Natural killer cell (primary cell): ENCODE measurements at regions of chr6 and their contacts with region 1.

Region 1: DNA sequence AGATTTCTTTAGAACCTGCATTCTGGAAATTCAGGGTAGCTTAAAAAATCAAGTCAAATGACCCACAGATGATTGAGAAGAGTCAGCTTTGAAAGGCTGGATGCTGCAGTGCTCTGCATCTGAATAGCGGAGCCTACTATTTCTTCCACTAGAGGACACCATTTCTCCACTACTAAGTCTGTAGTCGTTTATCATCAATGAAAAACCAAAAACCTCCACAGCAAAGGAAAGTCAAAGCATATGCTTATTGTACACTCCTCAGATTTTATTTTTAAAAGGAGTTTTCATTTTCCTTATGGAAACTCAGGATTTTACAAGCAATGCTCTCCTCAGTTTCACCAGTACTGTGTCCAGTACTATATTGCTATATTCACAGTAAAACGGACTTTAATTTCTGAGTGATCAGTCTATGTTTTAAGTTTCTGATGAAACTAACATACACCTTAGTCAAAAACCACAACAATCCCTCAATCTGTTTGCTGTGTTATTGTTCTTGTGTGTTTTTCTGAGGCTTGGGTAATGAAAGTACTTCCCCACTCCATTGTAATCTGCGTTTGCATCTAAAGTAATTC is 50.5 kb upstream of the ENPP5 start:
- DNase-seq: peak in 1 of 2 donors; percentile 49
- ATAC-seq: peak; percentile 69 to 88 (median 73)
- H3K4me3 ChIP-seq: no peak overlapping the region
- H3K4me3 Mint-ChIP-seq: no peak overlapping the region
- H3K27ac ChIP-seq: no peak overlapping the region
- H3K27ac Mint-ChIP-seq: no peak overlapping the region
- H3K4me1 ChIP-seq: no peaks in the 10 kb centered on the region
- H3K4me1 Mint-ChIP-seq: no peaks in the 10 kb centered on the region
- H3K27me3 ChIP-seq: no peaks in the 10 kb centered on the region
- H3K27me3 Mint-ChIP-seq: no peaks in the 10 kb centered on the region
- CTCF ChIP-seq: peak; percentile 84

Region 2: DNA sequence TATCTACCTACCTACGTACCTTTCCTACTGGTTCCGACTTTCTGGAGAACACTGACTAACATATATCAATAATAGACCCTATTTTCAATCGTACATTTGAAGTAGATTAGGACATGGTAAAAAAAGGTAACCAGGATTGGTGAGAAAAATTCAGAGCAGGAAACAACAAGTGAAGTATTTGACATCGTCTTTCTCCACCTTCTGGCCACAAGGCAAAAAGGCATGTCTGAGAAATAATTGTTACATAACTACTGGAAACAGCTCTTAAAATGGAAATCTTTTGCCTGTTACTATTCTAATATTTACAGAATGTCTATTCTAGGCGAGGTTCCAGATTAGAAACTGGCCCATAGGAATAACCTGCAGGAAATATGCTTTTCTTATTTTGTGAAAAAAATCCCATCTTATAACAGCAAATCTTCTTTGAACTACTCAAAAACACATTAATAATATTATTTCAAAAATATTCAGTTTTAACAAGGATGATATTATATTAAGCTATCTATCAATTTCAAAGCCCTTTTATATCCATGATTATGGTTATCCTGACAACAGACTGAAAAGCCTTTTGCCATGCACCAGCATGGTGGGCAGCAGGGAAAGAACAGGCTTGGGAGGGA is 189.1 kb after region 1 on chr6:
- intact Hi-C with region 1: loop called (anchors 1 kb)
- DNase-seq: peak in 1 of 2 donors; percentile 81
- ATAC-seq: peak in 1 of 3 donors; percentile 74
- H3K4me3 ChIP-seq: no peak overlapping the region
- H3K4me3 Mint-ChIP-seq: no peak overlapping the region
- H3K27ac ChIP-seq: no peak overlapping the region
- H3K27ac Mint-ChIP-seq: no peak overlapping the region
- H3K4me1 ChIP-seq: no peaks in the 10 kb centered on the region
- H3K4me1 Mint-ChIP-seq: no peaks in the 10 kb centered on the region
- H3K27me3 ChIP-seq: no peaks in the 10 kb centered on the region
- H3K27me3 Mint-ChIP-seq: peaks cover 0 to 4% of the 10 kb centered on the region in 2 donors
- CTCF ChIP-seq: peak; percentile 59

Region 3: GRCh38 chr6:46491628-46492547 is 270.6 kb after region 1 on chr6:
- intact Hi-C with region 1: loop called (anchors 5 kb)
- DNase-seq: peak; percentile 11 to 24
- ATAC-seq: peak; percentile 59 to 66 (median 65)
- H3K4me3 ChIP-seq: peak overlapping the region; percentile 46
- H3K4me3 Mint-ChIP-seq: peak overlapping the region; percentile 72
- H3K27ac ChIP-seq: no peak overlapping the region
- H3K27ac Mint-ChIP-seq: no peak overlapping the region
- H3K4me1 ChIP-seq: peaks cover 10% of the 10 kb centered on the region
- H3K4me1 Mint-ChIP-seq: peaks cover 4 to 13% of the 10 kb centered on the region in 2 donors
- H3K27me3 ChIP-seq: peaks cover 35% of the 10 kb centered on the region
- H3K27me3 Mint-ChIP-seq: peaks cover 47 to 75% of the 10 kb centered on the region in 2 donors
- CTCF ChIP-seq: peak; percentile 43

Region 4: DNA sequence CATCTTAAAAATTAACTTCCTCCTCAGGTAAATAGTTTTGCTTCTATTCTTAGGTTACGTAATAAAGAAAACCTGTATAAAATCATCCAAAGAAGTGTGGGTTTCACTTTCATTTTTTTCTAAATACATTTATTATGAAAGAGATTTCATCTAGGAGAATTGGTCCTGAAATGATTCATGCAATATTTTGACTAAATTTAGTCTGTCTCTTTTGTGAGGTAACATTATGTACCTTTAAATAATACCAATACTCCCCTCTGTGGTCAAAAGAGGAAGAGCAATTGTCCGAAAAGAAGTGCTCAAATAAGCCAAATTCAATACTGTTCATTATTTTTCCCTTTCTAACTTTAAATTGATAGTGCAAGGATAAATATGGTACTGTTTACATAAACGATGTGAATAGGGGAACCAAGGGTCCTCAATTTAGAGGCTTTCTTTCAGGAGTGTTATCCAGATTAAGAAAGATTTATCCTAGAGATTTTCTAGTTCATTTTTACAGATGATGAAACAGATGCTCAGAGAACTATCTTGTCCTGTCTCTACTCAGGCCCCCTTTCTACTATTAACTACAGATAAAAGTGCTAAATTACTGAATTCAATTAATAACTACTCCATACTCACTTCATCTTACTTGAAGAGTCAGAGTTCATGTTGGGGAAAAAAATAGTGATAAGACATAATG is 405.1 kb after region 1 on chr6:
- intact Hi-C with region 1: loop called (anchors 2 kb)
- DNase-seq: peak in 1 of 2 donors; percentile 23
- ATAC-seq: no peak
- H3K4me3 ChIP-seq: no peak overlapping the region
- H3K4me3 Mint-ChIP-seq: no peak overlapping the region
- H3K27ac ChIP-seq: no peak overlapping the region
- H3K27ac Mint-ChIP-seq: no peak overlapping the region
- H3K4me1 ChIP-seq: no peaks in the 10 kb centered on the region
- H3K4me1 Mint-ChIP-seq: no peaks in the 10 kb centered on the region
- H3K27me3 ChIP-seq: no peaks in the 10 kb centered on the region
- H3K27me3 Mint-ChIP-seq: peaks cover 21 to 26% of the 10 kb centered on the region in 2 donors
- CTCF ChIP-seq: peak; percentile 51

Region 5: DNA sequence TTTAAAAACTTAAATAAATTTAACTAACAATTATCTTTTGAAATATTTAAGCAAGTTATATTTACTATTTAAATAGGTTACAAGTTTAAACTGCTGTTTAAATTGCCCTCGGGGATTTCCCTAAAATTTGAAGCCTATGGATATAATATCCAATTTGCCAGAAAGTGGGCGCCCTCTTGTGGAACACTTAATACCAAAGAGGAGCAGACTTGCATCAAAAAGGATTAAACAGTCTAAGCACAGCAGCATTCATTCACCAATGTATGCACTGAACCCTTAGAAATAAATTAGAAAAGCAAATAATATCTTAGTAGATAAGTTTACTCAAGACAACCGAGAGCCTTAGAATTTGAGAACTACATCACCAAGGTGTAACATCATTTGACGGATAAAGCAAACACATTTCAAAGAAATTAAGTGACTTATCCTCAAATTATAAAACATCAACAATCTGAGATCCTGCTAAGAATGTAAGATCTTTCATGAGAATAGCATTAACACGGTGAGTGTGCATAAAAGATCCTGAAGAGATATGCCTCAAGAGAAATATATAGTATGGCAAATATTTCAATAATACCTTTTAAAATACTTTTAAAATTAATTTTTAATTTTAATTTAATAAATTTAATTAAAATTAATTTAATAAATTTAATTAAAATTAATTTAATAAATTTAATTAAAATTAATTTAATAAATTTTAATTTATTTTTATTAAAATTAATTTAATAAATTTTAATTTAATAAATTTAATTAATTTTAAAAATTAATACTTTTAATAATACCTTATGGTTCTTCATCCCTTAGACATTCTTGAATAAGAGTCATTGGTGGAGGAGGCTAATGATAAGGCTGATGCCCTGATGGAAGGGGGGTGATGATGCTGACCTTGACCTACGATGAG is 560.4 kb after region 1 on chr6:
- intact Hi-C with region 1: loop called (anchors 5 kb)
- DNase-seq: peak in 1 of 2 donors; percentile 16
- ATAC-seq: peak in 1 of 3 donors; percentile 50
- H3K4me3 ChIP-seq: no peak overlapping the region
- H3K4me3 Mint-ChIP-seq: no peak overlapping the region
- H3K27ac ChIP-seq: no peak overlapping the region
- H3K27ac Mint-ChIP-seq: no peak overlapping the region
- H3K4me1 ChIP-seq: no peaks in the 10 kb centered on the region
- H3K4me1 Mint-ChIP-seq: no peaks in the 10 kb centered on the region
- H3K27me3 ChIP-seq: no peaks in the 10 kb centered on the region
- H3K27me3 Mint-ChIP-seq: no peaks in the 10 kb centered on the region
- CTCF ChIP-seq: no peak